Panc1 (cell line): ENCODE measurements at regions of chrX and their contacts with region 1.

Region 1: DNA sequence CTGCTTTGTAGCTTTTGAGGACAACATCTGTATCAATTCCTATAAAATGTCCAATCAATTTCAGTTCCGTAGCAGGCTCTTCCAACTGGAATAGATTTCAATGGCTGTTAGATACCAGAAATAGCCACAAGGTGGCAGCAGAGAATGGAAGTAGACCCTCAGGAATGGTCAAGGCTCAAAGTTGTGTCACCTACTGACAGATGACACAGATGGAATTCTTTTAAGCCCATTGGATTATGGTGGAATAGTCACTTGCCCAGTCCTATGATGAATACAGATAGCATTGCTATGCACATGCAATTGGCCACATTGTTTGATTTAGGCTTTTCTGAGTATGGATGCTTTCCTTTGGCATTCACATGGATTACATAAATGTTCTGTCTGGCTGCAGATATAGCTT is 130.4 kb upstream of the RADX start:
- DNase-seq: peak; percentile 41
- ATAC-seq: peak; percentile 82
- H3K4me3 ChIP-seq: no peak overlapping the region
- H3K27ac ChIP-seq: no peak overlapping the region
- H3K4me1 ChIP-seq: no peaks in the 10 kb centered on the region
- H3K27me3 ChIP-seq: peaks cover 2% of the 10 kb centered on the region; the same call in 1 of the 2 replicates
- CTCF ChIP-seq: peak; percentile 79

Region 2: DNA sequence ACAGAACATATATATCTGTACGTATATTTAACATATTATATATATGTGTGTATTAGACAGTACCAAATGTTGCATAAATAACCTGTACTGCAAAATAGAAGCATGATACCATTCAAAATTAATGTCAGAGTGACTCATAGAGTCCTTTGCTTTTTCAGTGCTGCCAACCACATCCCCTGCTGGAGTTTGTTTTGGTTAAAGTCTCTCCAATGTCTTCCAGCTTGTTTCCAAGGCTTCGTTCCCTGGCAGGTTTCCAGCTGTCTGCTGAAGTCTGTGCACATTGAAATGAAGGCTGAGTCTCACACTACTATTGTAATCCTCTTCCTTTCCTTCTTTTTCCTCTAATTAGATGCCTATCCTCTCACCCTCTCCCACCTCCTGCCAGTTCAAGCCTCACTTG is 644.1 kb before region 1 on chrX:
- CTCF ChIA-PET with region 1: no interaction called
- POLR2A ChIA-PET with region 1: no interaction called
- in situ Hi-C with region 1: no loop called
- intact Hi-C with region 1: no loop called
- DNase-seq: no peak
- ATAC-seq: no peak
- H3K4me3 ChIP-seq: no peak overlapping the region
- H3K27ac ChIP-seq: no peak overlapping the region
- H3K4me1 ChIP-seq: no peaks in the 10 kb centered on the region
- H3K27me3 ChIP-seq: no peaks in the 10 kb centered on the region
- CTCF ChIP-seq: no peak

Region 3: DNA sequence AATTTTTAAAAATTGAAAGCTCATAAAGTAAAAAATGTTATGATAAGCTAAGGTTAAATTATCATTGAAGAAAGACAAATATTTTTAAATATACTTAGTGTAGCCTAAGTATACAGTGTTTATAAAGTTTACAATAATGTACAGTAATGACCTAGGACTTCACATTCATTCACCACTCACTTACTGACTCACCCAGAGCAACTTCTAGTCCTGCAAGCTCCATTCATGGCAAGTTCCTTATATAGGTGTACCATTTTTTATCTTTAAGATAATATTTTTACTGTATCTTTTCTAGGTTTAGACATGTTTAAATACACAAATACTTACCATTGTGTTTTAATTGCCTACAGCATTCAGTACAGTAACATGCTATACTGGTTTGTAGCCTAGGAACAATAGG is 18.1 kb after region 1 on chrX:
- CTCF ChIA-PET with region 1: no interaction called
- POLR2A ChIA-PET with region 1: interaction called, 10 read pairs
- in situ Hi-C with region 1: no loop called
- intact Hi-C with region 1: no loop called
- DNase-seq: no peak
- ATAC-seq: no peak
- H3K4me3 ChIP-seq: no peak overlapping the region
- H3K27ac ChIP-seq: no peak overlapping the region
- H3K4me1 ChIP-seq: no peaks in the 10 kb centered on the region
- H3K27me3 ChIP-seq: no peaks in the 10 kb centered on the region
- CTCF ChIP-seq: no peak

Region 4: GRCh38 chrX:106619797-106620196 is 138.5 kb after region 1 on chrX:
- CTCF ChIA-PET with region 1: no interaction called
- POLR2A ChIA-PET with region 1: no interaction called
- in situ Hi-C with region 1: no loop called
- intact Hi-C with region 1: loop called (anchors 2 kb)
- DNase-seq: no peak
- ATAC-seq: no peak
- H3K4me3 ChIP-seq: no peak overlapping the region
- H3K27ac ChIP-seq: no peak overlapping the region
- H3K4me1 ChIP-seq: no peaks in the 10 kb centered on the region; the same call in 1 of the 2 replicates
- H3K27me3 ChIP-seq: no peaks in the 10 kb centered on the region
- CTCF ChIP-seq: peak; percentile 67; the same call in 1 of the 2 replicates

Region 5: GRCh38 chrX:107871136-107871535 is 1389.8 kb after region 1 on chrX:
- CTCF ChIA-PET with region 1: no interaction called
- POLR2A ChIA-PET with region 1: no interaction called
- in situ Hi-C with region 1: no loop called
- intact Hi-C with region 1: no loop called
- DNase-seq: no peak
- ATAC-seq: no peak
- H3K4me3 ChIP-seq: no peak overlapping the region
- H3K27ac ChIP-seq: no peak overlapping the region
- H3K4me1 ChIP-seq: no peaks in the 10 kb centered on the region
- H3K27me3 ChIP-seq: no peaks in the 10 kb centered on the region
- CTCF ChIP-seq: no peak